PC-3 (cell line): ENCODE measurements at regions of chr3 and their contacts with region 1.

Region 1: DNA sequence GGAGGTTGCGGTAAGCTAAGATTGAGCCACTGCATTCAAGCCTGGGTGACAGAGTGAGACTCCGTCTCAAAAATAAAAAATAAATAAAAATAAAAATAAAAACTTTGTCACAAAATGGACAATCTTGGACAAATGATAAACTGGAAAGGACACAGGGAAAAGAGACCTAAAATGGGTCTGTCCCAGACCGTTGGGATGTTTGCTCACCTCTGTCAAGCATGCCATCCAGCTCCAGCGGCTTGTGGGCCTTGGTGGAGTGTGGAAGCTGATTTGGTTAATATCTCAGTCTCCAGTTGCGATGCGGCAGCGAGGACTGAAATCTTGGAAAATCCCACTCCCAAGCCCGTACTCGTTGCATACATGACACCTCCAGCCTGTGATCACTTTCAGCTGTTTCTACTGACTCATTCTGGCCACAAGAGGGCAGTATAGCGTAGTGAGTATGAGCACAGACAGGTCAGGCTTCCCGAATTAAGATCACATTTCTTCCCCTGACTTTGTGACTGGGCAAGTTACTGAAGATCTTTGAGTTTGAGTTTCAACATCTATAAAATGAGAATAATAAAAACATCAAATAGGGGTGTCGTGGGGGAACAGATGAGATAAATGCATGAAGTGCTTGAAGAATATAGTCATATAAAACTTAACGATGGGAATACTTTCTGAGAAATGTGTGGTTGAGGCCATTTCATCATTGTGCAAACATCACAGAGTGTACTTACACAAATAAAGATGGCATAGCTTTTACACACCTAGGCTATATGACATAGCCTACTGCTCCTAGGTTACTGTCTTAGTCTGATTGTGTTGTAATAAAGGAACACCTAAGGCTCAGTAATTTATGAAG is 19.6 kb upstream of the MOBP start:
- DNase-seq: peak; percentile 93
- ATAC-seq: peak; percentile 95
- H3K4me3 ChIP-seq: no peak overlapping the region
- H3K27ac ChIP-seq: no peak overlapping the region
- H3K4me1 ChIP-seq: peaks cover 7% of the 10 kb centered on the region; the same call in 1 of the 2 replicates
- H3K27me3 ChIP-seq: peaks cover 10% of the 10 kb centered on the region; the same call in 1 of the 2 replicates
- CTCF ChIP-seq: peak; percentile 97

Region 2: GRCh38 chr3:39414421-39414907 is 33.4 kb before region 1 on chr3:
- CTCF ChIA-PET with region 1: interaction called, 11 read pairs
- POLR2A ChIA-PET with region 1: no interaction called
- intact Hi-C with region 1: loop called (anchors 1 kb)
- DNase-seq: no peak
- ATAC-seq: peak; percentile 16
- H3K4me3 ChIP-seq: no peak overlapping the region
- H3K27ac ChIP-seq: no peak overlapping the region
- H3K4me1 ChIP-seq: peaks cover 5% of the 10 kb centered on the region
- H3K27me3 ChIP-seq: no peaks in the 10 kb centered on the region
- CTCF ChIP-seq: no peak

Region 3: GRCh38 chr3:39497753-39498152 is 49.9 kb after region 1 on chr3:
- CTCF ChIA-PET with region 1: interaction called, 4 read pairs
- POLR2A ChIA-PET with region 1: no interaction called
- intact Hi-C with region 1: loop called (anchors 1 kb)
- DNase-seq: no peak
- ATAC-seq: peak; percentile 48
- H3K4me3 ChIP-seq: peak overlapping the region; percentile 54
- H3K27ac ChIP-seq: no peak overlapping the region
- H3K4me1 ChIP-seq: peaks cover 7% of the 10 kb centered on the region; the same call in 1 of the 2 replicates
- H3K27me3 ChIP-seq: peaks cover 38% of the 10 kb centered on the region
- CTCF ChIP-seq: no peak

Region 4: DNA sequence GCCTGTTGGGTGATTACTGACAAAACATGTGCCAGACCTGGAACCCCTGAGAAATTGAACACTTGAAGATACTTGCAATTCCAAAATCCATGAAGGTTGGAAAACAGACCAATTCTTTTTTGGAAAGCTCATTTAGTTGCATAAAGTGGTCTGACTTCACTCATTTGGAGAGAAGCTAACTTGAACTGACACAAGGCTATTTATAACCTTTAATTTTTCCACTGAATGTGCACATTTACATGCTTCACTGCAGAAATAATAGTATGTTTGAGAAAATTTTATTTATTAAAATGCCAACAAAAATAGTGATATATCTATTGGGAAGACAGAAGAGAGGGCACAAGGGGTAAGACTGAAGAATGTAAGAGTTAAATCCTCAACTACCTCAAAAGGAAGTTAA is 111.7 kb after region 1 on chr3:
- CTCF ChIA-PET with region 1: no interaction called
- POLR2A ChIA-PET with region 1: no interaction called
- intact Hi-C with region 1: no loop called
- DNase-seq: no peak
- ATAC-seq: no peak
- H3K4me3 ChIP-seq: no peak overlapping the region
- H3K27ac ChIP-seq: no peak overlapping the region
- H3K4me1 ChIP-seq: no peaks in the 10 kb centered on the region
- H3K27me3 ChIP-seq: peaks cover 25% of the 10 kb centered on the region
- CTCF ChIP-seq: no peak

Region 5: GRCh38 chr3:40179016-40179415 is 731.2 kb after region 1 on chr3:
- CTCF ChIA-PET with region 1: no interaction called
- POLR2A ChIA-PET with region 1: no interaction called
- intact Hi-C with region 1: loop called (anchors 5 kb)
- DNase-seq: peak; percentile 81
- ATAC-seq: peak; percentile 92
- H3K4me3 ChIP-seq: no peak overlapping the region
- H3K27ac ChIP-seq: no peak overlapping the region
- H3K4me1 ChIP-seq: no peaks in the 10 kb centered on the region
- H3K27me3 ChIP-seq: peaks cover 11% of the 10 kb centered on the region
- CTCF ChIP-seq: peak; percentile 80